Mammary epithelial cell (primary cell): ENCODE measurements at regions of chr2 and their contacts with region 1.

Region 1: GRCh38 chr2:57906152-57906732 is 140.4 kb upstream of the VRK2 start:
- DNase-seq: peak; percentile 28
- H3K4me3 ChIP-seq: no peak overlapping the region
- H3K27ac ChIP-seq: no peak overlapping the region
- H3K4me1 ChIP-seq: no peaks in the 10 kb centered on the region
- H3K27me3 ChIP-seq: no peaks in the 10 kb centered on the region
- CTCF ChIP-seq: peak; percentile 86 to 93

Region 2: GRCh38 chr2:57759822-57760300 is 146.4 kb before region 1 on chr2:
- CTCF ChIA-PET with region 1: no interaction called
- dilution Hi-C with region 1: no loop called
- in situ Hi-C with region 1: no loop called
- intact Hi-C with region 1: loop called (anchors 1 kb)
- DNase-seq: peak; percentile 58
- H3K4me3 ChIP-seq: peak overlapping the region; percentile 5 to 25 (median 24)
- H3K27ac ChIP-seq: no peak overlapping the region
- H3K4me1 ChIP-seq: peaks cover 3% of the 10 kb centered on the region
- H3K27me3 ChIP-seq: no peaks in the 10 kb centered on the region
- CTCF ChIP-seq: peak; percentile 65 to 96

Region 3: GRCh38 chr2:58107803-58108710 is 201.8 kb after region 1 on chr2:
- CTCF ChIA-PET with region 1: no interaction called
- dilution Hi-C with region 1: no loop called
- in situ Hi-C with region 1: no loop called
- intact Hi-C with region 1: loop called (anchors 10 kb)
- DNase-seq: peak; percentile 89
- H3K4me3 ChIP-seq: no peak overlapping the region
- H3K27ac ChIP-seq: peak overlapping the region; percentile 87
- H3K4me1 ChIP-seq: peaks cover 26% of the 10 kb centered on the region
- H3K27me3 ChIP-seq: no peaks in the 10 kb centered on the region
- CTCF ChIP-seq: no peak

Region 4: GRCh38 chr2:58350484-58350883 is 444.2 kb after region 1 on chr2:
- CTCF ChIA-PET with region 1: no interaction called
- dilution Hi-C with region 1: no loop called
- in situ Hi-C with region 1: no loop called
- intact Hi-C with region 1: loop called (anchors 10 kb)
- DNase-seq: no peak
- H3K4me3 ChIP-seq: no peak overlapping the region
- H3K27ac ChIP-seq: no peak overlapping the region
- H3K4me1 ChIP-seq: no peaks in the 10 kb centered on the region
- H3K27me3 ChIP-seq: no peaks in the 10 kb centered on the region
- CTCF ChIP-seq: no peak

Region 5: GRCh38 chr2:58543432-58543831 is 637.2 kb after region 1 on chr2:
- CTCF ChIA-PET with region 1: interaction called, 12 read pairs
- dilution Hi-C with region 1: no loop called
- in situ Hi-C with region 1: no loop called
- intact Hi-C with region 1: no loop called
- DNase-seq: no peak
- H3K4me3 ChIP-seq: no peak overlapping the region
- H3K27ac ChIP-seq: no peak overlapping the region
- H3K4me1 ChIP-seq: no peaks in the 10 kb centered on the region
- H3K27me3 ChIP-seq: peaks cover 3% of the 10 kb centered on the region
- CTCF ChIP-seq: no peak

Region 6: GRCh38 chr2:58571181-58571852 is 665.1 kb after region 1 on chr2:
- CTCF ChIA-PET with region 1: no interaction called
- dilution Hi-C with region 1: no loop called
- in situ Hi-C with region 1: no loop called
- intact Hi-C with region 1: loop called (anchors 1 kb)
- DNase-seq: peak; percentile 69
- H3K4me3 ChIP-seq: no peak overlapping the region
- H3K27ac ChIP-seq: no peak overlapping the region
- H3K4me1 ChIP-seq: peaks cover 5% of the 10 kb centered on the region
- H3K27me3 ChIP-seq: no peaks in the 10 kb centered on the region
- CTCF ChIP-seq: peak; percentile 82 to 88